ENCODE measurements at regions of chr3 and their contacts with region 1.

Region 1: GRCh38 chr3:178966299-178967176 is 105.1 kb downstream of the ZMAT3 start:
- DNase-seq: peak; percentile 25
- H3K4me3 Mint-ChIP-seq: no peak overlapping the region
- H3K27ac Mint-ChIP-seq: no peak overlapping the region
- H3K4me1 Mint-ChIP-seq: no peaks in the 10 kb centered on the region
- H3K27me3 Mint-ChIP-seq: no peaks in the 10 kb centered on the region
- CTCF ChIP-seq: peak; percentile 63

Region 2: GRCh38 chr3:178385280-178385952 is 581.1 kb before region 1 on chr3:
- CTCF ChIA-PET with region 1: no interaction called
- POLR2A ChIA-PET with region 1: no interaction called
- intact Hi-C with region 1: no loop called
- DNase-seq: peak; percentile 51
- H3K4me3 Mint-ChIP-seq: no peak overlapping the region
- H3K27ac Mint-ChIP-seq: no peak overlapping the region
- H3K4me1 Mint-ChIP-seq: peaks cover 18% of the 10 kb centered on the region
- H3K27me3 Mint-ChIP-seq: no peaks in the 10 kb centered on the region
- CTCF ChIP-seq: peak; percentile 69

Region 3: GRCh38 chr3:178436773-178437172 is 529.8 kb before region 1 on chr3:
- CTCF ChIA-PET with region 1: interaction called, 143 read pairs
- POLR2A ChIA-PET with region 1: interaction called, 6 read pairs
- intact Hi-C with region 1: loop called (anchors 1 kb)
- DNase-seq: peak; percentile 37
- H3K4me3 Mint-ChIP-seq: no peak overlapping the region
- H3K27ac Mint-ChIP-seq: no peak overlapping the region
- H3K4me1 Mint-ChIP-seq: peaks cover 11% of the 10 kb centered on the region
- H3K27me3 Mint-ChIP-seq: no peaks in the 10 kb centered on the region
- CTCF ChIP-seq: peak; percentile 50

Region 4: DNA sequence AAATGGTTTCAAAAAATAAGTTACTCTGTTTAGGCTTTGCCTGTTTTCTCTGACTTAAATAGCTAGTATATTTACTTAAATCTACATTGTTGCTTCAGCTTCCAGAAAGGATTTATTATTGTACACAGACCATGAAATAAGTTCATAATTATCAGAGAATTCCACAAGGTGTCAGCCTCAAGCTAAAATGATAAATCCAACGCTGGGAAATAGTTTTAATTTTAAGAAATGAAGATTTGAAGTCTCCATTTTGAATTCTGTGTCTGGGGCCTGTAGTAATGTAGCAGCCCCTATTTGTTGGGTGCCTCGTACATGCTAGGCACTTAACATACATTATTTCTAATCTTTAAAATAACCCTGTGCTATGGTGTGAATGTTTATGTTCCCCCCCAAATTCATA is 522.9 kb before region 1 on chr3:
- CTCF ChIA-PET with region 1: interaction called, 143 read pairs
- POLR2A ChIA-PET with region 1: no interaction called
- intact Hi-C with region 1: loop called (anchors 1 kb)
- DNase-seq: peak; percentile 23
- H3K4me3 Mint-ChIP-seq: no peak overlapping the region
- H3K27ac Mint-ChIP-seq: no peak overlapping the region
- H3K4me1 Mint-ChIP-seq: peaks cover 4% of the 10 kb centered on the region
- H3K27me3 Mint-ChIP-seq: no peaks in the 10 kb centered on the region
- CTCF ChIP-seq: peak; percentile 33

Region 5: DNA sequence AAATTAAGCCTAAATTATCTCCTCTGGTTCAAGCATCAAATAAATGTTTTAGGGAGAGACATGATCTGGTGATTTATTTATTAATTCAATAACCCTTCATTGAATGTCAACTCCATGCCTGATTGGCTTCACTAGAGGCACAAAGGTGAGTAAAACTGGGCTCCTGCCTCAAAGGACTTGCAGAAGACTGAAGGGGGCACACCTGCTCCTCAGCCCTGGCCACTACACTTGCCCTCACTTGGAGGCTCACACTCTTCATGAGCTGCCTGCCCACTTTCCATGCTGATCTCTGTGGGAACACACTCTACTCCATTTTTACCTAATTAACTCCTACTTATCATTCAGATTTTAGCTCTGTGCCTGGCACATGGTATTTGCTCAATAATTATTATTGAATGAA is 514.7 kb before region 1 on chr3:
- CTCF ChIA-PET with region 1: interaction called, 28 read pairs
- POLR2A ChIA-PET with region 1: no interaction called
- intact Hi-C with region 1: no loop called
- DNase-seq: no peak
- H3K4me3 Mint-ChIP-seq: no peak overlapping the region
- H3K27ac Mint-ChIP-seq: no peak overlapping the region
- H3K4me1 Mint-ChIP-seq: no peaks in the 10 kb centered on the region
- H3K27me3 Mint-ChIP-seq: no peaks in the 10 kb centered on the region
- CTCF ChIP-seq: no peak

Measured in MCF 10A (cell line).